ENCODE measurements at regions of chrX and their contacts with region 1.

Region 1: DNA sequence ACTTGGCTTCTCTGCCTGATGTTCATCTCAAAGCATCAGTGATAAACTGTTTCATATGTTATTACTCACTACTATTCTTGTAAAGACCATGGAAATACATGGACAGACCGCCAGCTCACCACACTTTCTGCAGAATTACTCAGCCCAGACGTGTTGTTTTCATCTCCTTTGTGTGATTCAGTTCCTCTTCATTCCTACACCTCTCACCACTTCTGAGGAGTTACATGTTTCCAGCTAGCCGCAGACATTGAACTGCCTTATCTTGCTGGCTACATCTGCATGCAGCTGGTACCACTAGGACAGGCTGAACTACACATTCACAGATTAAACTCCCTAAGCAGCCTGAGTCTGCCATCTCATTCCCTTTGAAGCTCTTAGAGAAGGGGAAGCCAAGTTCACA is 443.2 kb upstream of the FGF16 start:
- DNase-seq: peak; percentile 72
- H3K4me3 Mint-ChIP-seq: no peak overlapping the region
- H3K27ac Mint-ChIP-seq: peak overlapping the region; percentile 75
- H3K4me1 Mint-ChIP-seq: peaks cover 16% of the 10 kb centered on the region
- H3K27me3 Mint-ChIP-seq: peaks cover 3% of the 10 kb centered on the region

Region 2: GRCh38 chrX:76971393-76972376 is 32.3 kb before region 1 on chrX:
- CTCF ChIA-PET with region 1: no interaction called
- intact Hi-C with region 1: loop called (anchors 1 kb)
- DNase-seq: peak; percentile 7
- H3K4me3 Mint-ChIP-seq: no peak overlapping the region
- H3K27ac Mint-ChIP-seq: peak overlapping the region; percentile 82
- H3K4me1 Mint-ChIP-seq: peaks cover 5% of the 10 kb centered on the region
- H3K27me3 Mint-ChIP-seq: no peaks in the 10 kb centered on the region

Region 3: DNA sequence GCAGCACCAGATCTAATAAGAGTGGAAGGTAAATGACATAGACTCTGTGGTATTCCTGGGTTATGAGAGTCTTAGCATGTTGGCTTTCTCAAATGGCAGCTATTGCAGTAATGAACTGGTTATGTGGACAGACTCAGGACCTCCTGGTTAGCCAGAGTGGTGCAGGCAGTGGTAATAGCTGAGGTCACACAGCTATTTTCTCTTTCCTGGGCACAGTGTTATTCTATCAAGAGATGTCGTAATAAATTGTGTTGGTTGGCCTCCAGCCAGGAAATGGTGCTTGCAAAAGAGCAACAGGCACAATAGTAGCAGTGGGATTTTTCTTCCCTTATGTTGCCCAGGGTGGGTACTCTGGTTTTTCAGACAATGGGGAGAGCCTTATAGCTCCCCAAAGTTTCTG is 164.0 kb after region 1 on chrX:
- CTCF ChIA-PET with region 1: no interaction called
- intact Hi-C with region 1: no loop called
- DNase-seq: no peak
- H3K4me3 Mint-ChIP-seq: no peak overlapping the region
- H3K27ac Mint-ChIP-seq: no peak overlapping the region
- H3K4me1 Mint-ChIP-seq: no peaks in the 10 kb centered on the region
- H3K27me3 Mint-ChIP-seq: no peaks in the 10 kb centered on the region

Measured in activated naive CD4-positive, alpha-beta T cell treated with anti-CD3 and anti-CD28 coated beads for 36 hours (primary cell).